Caco-2 (cell line): ENCODE measurements at regions of chr13 and their contacts with region 1.

Region 1: DNA sequence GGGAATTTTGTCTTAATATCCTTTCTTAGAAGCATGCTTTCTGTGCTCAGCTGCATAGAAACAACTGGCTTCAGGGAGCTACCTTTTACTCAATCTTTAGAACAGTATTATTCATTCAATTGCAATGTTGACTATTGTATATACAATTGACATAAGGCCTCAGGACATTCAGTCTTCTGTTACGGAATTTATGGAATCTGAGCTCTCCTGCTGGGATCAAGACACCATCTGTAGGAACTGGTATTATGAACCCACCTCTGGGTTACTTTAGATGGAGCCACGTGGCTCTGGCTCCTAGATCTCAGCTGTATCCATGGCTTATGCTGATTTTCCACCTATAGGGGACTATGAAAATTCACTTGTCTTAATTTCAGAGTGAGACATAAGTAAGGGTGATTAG is 716.2 kb upstream of the GPC6 start:
- DNase-seq: no peak
- H3K4me3 ChIP-seq: no peak overlapping the region
- H3K4me3 Mint-ChIP-seq: no peak overlapping the region
- H3K27ac Mint-ChIP-seq: no peak overlapping the region
- H3K4me1 ChIP-seq: peaks cover 21% of the 10 kb centered on the region
- H3K4me1 Mint-ChIP-seq: peaks cover 9% of the 10 kb centered on the region
- H3K27me3 ChIP-seq: no peaks in the 10 kb centered on the region
- H3K27me3 Mint-ChIP-seq: no peaks in the 10 kb centered on the region
- CTCF ChIP-seq: no peak

Region 2: GRCh38 chr13:92488249-92488852 is 22.1 kb before region 1 on chr13:
- CTCF ChIA-PET with region 1: no interaction called
- POLR2A ChIA-PET with region 1: no interaction called
- intact Hi-C with region 1: no loop called
- DNase-seq: no peak
- H3K4me3 ChIP-seq: no peak overlapping the region
- H3K4me3 Mint-ChIP-seq: no peak overlapping the region
- H3K27ac Mint-ChIP-seq: no peak overlapping the region
- H3K4me1 ChIP-seq: no peaks in the 10 kb centered on the region
- H3K4me1 Mint-ChIP-seq: no peaks in the 10 kb centered on the region
- H3K27me3 ChIP-seq: no peaks in the 10 kb centered on the region
- H3K27me3 Mint-ChIP-seq: no peaks in the 10 kb centered on the region
- CTCF ChIP-seq: no peak

Region 3: DNA sequence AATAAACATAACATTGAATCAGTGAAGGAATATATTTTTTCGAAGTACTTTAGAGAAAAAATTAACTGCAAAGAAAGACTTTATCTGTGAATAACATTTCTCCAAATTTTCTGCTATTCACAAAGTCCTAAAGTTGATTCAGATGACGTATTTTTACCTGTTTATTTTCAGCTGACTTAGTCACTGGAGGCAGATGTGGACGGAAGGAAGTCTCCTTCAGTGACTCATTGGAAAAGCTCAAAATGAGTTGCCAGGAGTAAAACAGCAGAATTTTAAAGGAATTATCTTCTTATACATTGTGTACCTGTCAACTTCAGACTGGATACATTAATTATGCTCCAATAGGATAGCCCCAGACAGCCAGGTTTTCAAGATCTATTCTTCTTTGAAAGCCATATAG is 36.9 kb after region 1 on chr13:
- CTCF ChIA-PET with region 1: no interaction called
- POLR2A ChIA-PET with region 1: no interaction called
- intact Hi-C with region 1: loop called (anchors 1 kb)
- DNase-seq: no peak
- H3K4me3 ChIP-seq: no peak overlapping the region
- H3K4me3 Mint-ChIP-seq: no peak overlapping the region
- H3K27ac Mint-ChIP-seq: no peak overlapping the region
- H3K4me1 ChIP-seq: 0 out of 2 replicates have a peak, but pooled peaks cover 11% of the 10 kb centered on the region
- H3K4me1 Mint-ChIP-seq: no peaks in the 10 kb centered on the region
- H3K27me3 ChIP-seq: no peaks in the 10 kb centered on the region
- H3K27me3 Mint-ChIP-seq: no peaks in the 10 kb centered on the region
- CTCF ChIP-seq: no peak